Activated T-helper 2 cell treated with anti-CD3 and anti-CD28 coated beads, Interferon-gamma antibody, Interleukin-2, Interleukin-4, amounts not matched to agents 10 μg/mL and 5 μg/mL and 100 μg/mL, durations not matched to agents 14 hours and 24 hours and 36 hours (primary cell): ENCODE measurements at regions of chr11 and their contacts with region 1.

Region 1: DNA sequence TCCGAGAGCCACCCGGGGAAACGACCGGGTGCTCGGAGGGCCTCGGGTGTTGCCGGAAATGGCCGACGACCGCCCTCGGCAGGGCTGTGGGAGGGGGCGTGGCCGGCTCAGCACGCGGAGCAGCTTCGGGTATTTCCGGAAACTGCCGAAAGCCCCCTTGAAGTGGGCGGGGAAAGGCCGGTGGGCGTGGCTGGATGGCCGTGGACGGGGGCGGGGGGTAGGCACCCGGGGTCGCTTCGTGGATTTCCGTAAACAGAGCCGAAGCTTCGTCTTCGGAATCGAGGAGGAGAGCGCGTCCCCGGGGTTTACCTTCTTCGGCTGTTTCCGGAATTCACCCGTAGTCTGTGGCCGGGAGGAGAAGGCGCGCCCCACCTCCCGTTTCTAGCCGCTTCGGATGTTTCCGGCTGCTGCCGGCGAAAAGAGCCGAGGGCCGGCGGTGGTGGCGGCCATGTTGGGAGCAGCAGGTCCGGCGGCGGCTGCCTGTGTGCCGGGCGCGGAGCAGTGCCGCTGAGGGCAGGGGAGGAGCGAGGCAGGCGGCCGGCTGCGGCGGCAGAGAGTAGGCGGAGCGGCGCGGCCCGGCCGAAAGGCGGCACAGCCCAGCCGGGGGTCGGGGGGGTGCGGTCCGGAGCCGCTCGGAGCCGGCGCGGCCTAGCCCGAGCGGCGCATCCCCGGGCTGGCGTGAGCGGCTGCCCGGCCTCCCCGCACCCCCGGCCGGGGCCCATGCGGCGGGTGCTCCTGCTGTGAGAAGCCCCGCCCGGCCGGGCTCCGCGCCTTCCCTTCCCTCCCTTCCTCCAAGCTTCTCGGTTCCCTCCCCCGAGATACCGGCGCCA is at the start of gene MARK2:
- DNase-seq: peak; percentile 99
- H3K4me3 Mint-ChIP-seq: peak within 1 kb of the TSS; percentile 87
- H3K27ac Mint-ChIP-seq: peak within 1 kb of the TSS; percentile 85
- H3K4me1 Mint-ChIP-seq: peaks cover 48% of the 10 kb centered on the region
- H3K27me3 Mint-ChIP-seq: no peaks in the 10 kb centered on the region
- total RNA-seq, gene MARK2: 36.5 and 38.8 TPM in 2 replicates

Region 2: DNA sequence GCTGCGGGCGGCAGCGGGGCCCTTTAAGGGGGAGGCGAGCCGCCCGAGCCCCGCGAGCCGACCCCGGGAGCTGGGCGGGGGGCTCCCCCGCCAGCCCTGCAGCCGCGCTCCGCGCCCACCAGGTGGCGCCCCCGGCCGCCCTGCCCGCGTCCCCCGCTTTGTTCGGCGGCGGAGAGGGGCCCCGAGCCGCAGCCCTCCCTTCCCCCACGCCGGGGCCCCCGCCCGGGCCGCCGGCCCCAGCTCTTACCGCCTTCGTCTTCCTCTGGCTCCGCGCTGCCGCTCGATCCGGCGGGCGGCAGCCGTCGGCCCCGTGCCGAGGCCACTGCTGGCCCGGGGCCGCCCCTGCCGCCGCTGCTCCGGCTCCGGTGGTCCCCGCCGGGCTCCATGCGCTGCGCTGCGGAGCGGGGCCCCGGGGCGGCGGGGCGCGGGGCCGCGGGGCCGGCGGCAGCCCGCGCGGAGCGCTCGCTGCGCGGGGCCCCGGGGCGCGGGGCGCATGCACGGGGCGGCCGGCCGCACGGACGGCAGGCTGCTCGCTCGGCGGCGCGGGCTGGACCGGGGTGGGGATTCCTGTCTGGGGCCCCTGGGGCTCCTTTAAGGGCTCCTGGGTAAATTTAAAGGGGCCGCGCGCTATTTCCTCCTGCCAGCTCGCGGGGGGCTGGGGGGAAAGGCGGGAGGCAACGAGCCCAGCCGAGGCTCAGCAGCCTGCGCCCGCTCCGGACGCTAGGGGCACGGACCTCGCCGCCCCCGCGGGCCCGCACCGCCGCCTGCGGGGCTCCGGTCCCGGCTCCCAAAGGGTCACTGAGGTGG is 70.5 kb before region 1 on chr11 and contains the start of gene ZFTA:
- intact Hi-C with region 1: loop called (anchors 2 kb)
- DNase-seq: peak; percentile 43
- H3K4me3 Mint-ChIP-seq: peak within 1 kb of the TSS; percentile 86
- H3K27ac Mint-ChIP-seq: peak within 1 kb of the TSS; percentile 24
- H3K4me1 Mint-ChIP-seq: peaks cover 12% of the 10 kb centered on the region
- H3K27me3 Mint-ChIP-seq: peaks cover 29% of the 10 kb centered on the region
- total RNA-seq, gene ZFTA: 7.0 and 8.9 TPM in 2 replicates

Region 3: GRCh38 chr11:63821411-63821810 is 17.5 kb before region 1 on chr11:
- intact Hi-C with region 1: no loop called
- DNase-seq: no peak
- H3K4me3 Mint-ChIP-seq: no peak overlapping the region
- H3K27ac Mint-ChIP-seq: no peak overlapping the region
- H3K4me1 Mint-ChIP-seq: no peaks in the 10 kb centered on the region
- H3K27me3 Mint-ChIP-seq: no peaks in the 10 kb centered on the region

Region 4: GRCh38 chr11:63888170-63889086 is 49.5 kb after region 1 on chr11:
- intact Hi-C with region 1: loop called (anchors 1 kb)
- DNase-seq: peak; percentile 58
- H3K4me3 Mint-ChIP-seq: peak overlapping the region; percentile 91
- H3K27ac Mint-ChIP-seq: peak overlapping the region; percentile 85
- H3K4me1 Mint-ChIP-seq: peaks cover 69% of the 10 kb centered on the region
- H3K27me3 Mint-ChIP-seq: no peaks in the 10 kb centered on the region

Region 5: DNA sequence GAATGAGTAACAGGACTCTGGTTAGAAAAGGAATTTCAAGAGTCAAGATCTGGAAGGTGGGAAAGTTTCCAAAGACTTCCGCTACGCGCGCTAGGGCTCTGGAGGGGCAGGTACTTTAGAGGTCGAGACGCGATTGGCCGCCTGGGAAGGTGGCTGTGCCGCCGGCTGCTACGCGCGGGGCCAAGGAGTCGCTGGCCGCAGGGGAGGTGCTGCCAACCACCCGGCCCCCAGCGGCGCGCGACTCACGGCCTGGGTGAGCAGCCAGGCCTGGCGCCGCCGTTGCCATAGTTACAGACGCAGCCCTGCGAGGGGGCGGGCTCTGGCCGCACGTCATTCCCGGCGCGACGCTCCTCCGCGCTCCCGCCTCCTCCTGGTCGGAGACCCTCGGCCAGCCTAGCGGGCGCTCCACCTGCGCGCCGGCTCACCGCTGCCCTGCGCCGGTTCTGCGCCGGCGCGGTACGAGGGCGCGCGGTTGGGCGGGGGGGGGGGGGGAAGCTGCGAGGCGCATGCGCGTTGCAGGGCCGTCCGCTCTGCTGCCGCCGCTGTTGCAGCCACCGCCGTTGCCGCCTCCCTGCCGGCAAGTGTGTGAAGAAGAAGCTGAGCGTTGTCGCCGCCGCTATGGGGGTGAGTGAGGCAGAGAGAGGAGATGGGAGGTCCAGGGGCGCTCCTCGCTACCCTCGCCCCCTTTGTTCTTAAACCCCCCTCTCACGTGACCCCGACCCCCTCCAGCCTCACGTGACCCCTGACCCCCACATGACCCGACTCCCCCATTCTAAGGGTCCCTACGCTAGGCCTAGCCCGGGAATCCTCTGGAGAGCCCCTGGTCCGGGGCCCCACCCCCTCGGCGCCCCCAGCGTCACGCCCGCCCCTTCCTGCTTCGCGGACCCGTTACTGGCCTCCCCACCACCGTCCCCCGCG is 99.8 kb after region 1 on chr11 and contains the start of gene NAA40:
- intact Hi-C with region 1: loop called (anchors 1 kb)
- DNase-seq: peak; percentile 91
- H3K4me3 Mint-ChIP-seq: peak within 1 kb of the TSS; percentile 91
- H3K27ac Mint-ChIP-seq: peak within 1 kb of the TSS; percentile 72
- H3K4me1 Mint-ChIP-seq: peaks cover 14% of the 10 kb centered on the region
- H3K27me3 Mint-ChIP-seq: no peaks in the 10 kb centered on the region
- total RNA-seq, gene NAA40: 29.9 and 30.3 TPM in 2 replicates

Region 6: GRCh38 chr11:63974259-63975143 is 135.6 kb after region 1 on chr11 and contains the start of gene COX8A:
- intact Hi-C with region 1: loop called (anchors 10 kb)
- DNase-seq: peak; percentile 98
- H3K4me3 Mint-ChIP-seq: peak within 1 kb of the TSS; percentile 100
- H3K27ac Mint-ChIP-seq: peak within 1 kb of the TSS; percentile 98
- H3K4me1 Mint-ChIP-seq: peaks cover 21% of the 10 kb centered on the region
- H3K27me3 Mint-ChIP-seq: no peaks in the 10 kb centered on the region
- total RNA-seq, gene COX8A: 312 and 326 TPM in 2 replicates